Mammary epithelial cell (primary cell): ENCODE measurements at regions of chr21 and their contacts with region 1.

Region 1: GRCh38 chr21:27681841-27682240 is 715.0 kb upstream of the ADAMTS5 start:
- DNase-seq: peak; percentile 43
- H3K4me3 ChIP-seq: no peak overlapping the region
- H3K27ac ChIP-seq: peak overlapping the region; percentile 71
- H3K4me1 ChIP-seq: peaks cover 6% of the 10 kb centered on the region
- H3K27me3 ChIP-seq: no peaks in the 10 kb centered on the region
- CTCF ChIP-seq: no peak

Region 2: GRCh38 chr21:27648560-27648959 is 33.3 kb before region 1 on chr21:
- CTCF ChIA-PET with region 1: no interaction called
- dilution Hi-C with region 1: no loop called
- in situ Hi-C with region 1: no loop called
- intact Hi-C with region 1: loop called (anchors 2 kb)
- DNase-seq: peak; percentile 85
- H3K4me3 ChIP-seq: no peak overlapping the region
- H3K27ac ChIP-seq: peak overlapping the region; percentile 98
- H3K4me1 ChIP-seq: peaks cover 47% of the 10 kb centered on the region
- H3K27me3 ChIP-seq: no peaks in the 10 kb centered on the region
- CTCF ChIP-seq: no peak